Gastrocnemius medialis (tissue), 4 donors: ENCODE measurements at regions of chr20 and their contacts with region 1.

Region 1: DNA sequence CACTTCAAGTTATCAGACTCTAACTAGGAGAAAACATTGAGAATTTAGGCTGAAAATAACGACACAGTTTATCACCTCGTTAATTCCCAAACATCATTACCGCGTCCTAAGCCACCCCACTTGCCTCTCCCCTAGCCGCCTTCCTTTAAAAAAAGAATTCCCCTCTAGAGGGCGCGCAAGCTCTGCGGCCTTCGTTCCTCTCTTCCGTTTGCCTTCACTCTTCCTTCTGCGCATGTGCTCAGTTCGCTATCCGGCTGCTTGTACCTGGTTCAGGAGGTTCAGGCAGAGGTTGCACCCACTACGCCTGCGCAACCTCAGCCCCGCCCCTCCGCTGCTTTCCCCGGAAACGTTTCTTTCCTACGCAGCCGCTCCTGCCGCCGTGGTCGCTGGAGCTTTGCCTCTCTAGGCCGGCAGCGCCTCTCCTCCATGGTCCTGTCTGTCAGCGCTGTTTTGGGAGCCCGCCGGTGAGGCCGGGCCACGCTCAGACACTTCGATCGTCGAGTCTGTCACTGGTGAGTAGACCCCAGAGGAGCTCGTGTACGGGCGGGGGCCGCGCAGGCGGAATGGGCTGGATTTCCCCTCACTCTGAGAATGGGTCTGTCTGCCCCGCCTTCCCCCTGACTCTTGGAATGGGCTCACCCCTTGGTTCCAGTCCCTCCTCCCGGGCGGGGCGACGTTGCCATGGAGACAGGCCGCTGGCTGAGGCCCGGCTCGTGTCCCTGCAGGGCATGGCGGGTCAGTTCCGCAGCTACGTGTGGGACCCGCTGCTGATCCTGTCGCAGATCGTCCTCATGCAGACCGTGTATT is at the start of gene SYS1:
- DNase-seq: peak; percentile 98
- ATAC-seq: peak; percentile 63 to 76
- H3K4me3 ChIP-seq: peak within 1 kb of the TSS; percentile 66 to 86 (median 75)
- H3K27ac ChIP-seq: peak within 1 kb of the TSS; percentile 94 to 99 (median 96)
- H3K4me1 ChIP-seq: peaks cover 26 to 27% of the 10 kb centered on the region in 2 donors
- H3K27me3 ChIP-seq: no peaks in the 10 kb centered on the region
- CTCF ChIP-seq: peak; percentile 89 to 95 (median 95)
- POLR2A ChIP-seq: peak; percentile 90 to 97
- total RNA-seq, gene SYS1: 34.0 to 59.5 (median 43.7) TPM

Region 2: DNA sequence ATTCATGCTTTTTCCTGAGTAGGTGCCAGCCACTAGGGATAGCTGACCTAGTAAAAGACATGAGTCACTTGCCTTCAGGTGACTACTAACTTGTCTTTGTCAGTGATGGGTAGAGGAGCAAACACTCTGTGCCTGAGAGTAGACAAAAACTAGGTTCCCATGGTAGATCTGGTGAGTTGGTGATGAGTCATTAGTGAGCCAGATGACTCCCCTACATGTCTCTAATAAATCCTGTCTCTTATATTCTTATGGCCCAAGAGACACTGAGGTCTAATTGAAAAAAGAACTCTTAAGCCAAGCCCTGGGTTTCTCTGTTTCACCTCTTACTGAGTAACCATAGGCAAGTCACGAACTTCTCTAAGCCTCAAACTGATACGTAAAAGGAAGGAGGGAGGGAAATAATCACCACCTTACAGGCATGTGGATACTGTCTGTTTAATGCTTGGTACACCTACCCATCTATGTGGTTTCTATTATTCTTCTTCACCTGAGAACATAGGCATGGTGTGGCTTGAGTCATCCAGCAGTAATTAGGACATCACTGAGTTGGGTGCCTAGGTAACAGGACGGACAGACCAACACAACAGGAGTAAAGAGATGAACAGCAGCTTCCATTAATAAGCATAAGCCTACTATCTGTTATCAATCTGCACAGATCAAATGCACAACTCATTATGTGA is 867.1 kb before region 1 on chr20:
- in situ Hi-C with region 1: no loop called
- intact Hi-C with region 1: loop called (anchors 10 kb)
- DNase-seq: no peak
- ATAC-seq: peak; percentile 76 to 82
- H3K4me3 ChIP-seq: no peak overlapping the region
- H3K27ac ChIP-seq: peak overlapping the region; percentile 82 to 93 (median 91)
- H3K4me1 ChIP-seq: peaks cover 40 to 48% of the 10 kb centered on the region in 2 donors
- H3K27me3 ChIP-seq: no peaks in the 10 kb centered on the region
- CTCF ChIP-seq: no peak
- POLR2A ChIP-seq: no peak

Region 3: DNA sequence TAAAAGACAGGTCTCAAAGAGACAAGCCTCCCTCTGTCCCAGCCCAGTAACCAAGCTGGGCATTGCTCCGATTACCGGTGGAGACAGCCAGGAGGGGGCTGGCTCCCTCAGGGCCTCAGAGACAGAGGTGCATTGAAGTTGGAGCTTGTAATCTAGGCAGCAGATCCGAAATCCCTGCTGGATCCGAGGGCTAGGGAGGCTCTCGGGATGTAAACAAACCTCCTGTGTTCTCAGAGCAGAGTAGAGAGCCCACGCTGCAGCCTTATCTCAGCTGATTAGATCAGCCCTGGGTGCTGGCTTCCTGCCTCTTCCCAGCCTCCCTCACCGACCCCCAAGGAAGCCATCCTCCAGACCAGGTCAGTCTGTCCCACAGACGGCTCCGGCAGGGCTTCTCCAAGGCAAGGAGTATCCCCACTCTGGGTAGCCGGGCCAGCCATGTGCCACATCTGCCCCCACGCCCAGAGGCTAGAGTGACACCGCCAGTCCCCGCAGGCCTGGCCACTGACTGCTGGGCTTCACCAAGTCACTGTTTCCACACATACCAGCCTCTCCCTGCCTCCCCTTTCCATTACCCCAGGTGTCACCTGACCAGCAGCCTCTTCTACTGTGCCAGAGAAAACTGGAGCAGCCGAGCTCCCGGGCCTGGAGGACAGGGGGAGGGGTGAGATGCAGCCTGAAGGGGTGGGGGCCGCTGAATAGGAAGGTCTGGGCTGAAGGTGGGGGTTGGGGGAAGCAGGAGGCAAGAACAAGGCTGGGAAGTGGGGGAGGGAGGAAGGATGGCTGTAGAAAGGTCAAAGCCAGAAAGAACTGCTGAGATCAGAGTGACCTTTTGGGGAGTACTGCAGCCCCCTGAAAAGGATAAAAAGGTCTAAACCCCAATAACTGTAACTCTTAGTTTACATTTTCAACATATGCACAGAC is 20.8 kb before region 1 on chr20:
- in situ Hi-C with region 1: no loop called
- intact Hi-C with region 1: loop called (anchors 1 kb)
- DNase-seq: peak; percentile 89 to 96
- ATAC-seq: peak; percentile 42 to 50
- H3K4me3 ChIP-seq: peak overlapping the region; percentile 48 to 97 (median 75)
- H3K27ac ChIP-seq: peak overlapping the region; percentile 90 to 100 (median 98)
- H3K4me1 ChIP-seq: peaks cover 78 to 94% of the 10 kb centered on the region in 2 donors
- H3K27me3 ChIP-seq: no peaks in the 10 kb centered on the region
- CTCF ChIP-seq: no peak
- POLR2A ChIP-seq: peak; percentile 88 to 91

Region 4: DNA sequence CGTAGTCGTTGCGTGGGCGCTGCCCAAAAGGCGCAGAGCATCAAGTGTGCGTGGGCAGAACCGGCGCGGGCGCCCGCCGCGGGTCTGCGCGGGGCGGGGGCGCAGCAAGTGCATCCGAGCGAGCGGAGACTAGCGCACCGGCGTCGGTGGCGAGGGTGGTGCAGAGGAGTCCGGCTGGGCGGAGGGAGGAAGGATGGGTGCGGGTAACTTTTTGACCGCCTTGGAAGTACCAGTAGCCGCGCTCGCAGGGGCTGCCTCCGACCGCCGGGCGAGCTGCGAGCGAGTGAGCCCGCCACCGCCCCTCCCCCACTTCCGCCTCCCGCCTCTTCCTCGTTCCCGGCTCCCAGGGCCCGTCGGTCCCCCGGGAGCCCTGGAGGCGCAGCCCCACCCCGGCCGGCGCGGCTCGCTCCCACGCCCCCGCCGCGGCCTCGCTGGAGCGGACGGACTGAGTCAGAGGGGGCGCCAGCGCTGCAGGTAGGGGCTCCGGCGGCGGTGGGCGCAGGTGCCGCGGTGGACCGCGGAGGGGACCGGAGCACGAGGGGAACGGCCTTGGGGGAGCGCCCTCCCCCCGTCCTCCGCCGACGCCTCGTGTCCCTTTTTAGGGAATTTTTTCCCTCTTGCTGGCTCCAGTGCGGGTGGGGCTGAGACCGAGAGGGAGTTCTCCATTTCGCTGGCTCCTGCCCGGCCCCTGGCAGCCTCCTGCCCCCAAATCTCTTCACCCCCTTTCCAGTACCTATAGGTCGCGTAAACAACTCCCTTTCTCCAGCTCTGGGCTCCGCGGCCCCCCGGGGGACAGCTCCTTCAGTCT is 43.5 kb after region 1 on chr20:
- in situ Hi-C with region 1: no loop called
- intact Hi-C with region 1: loop called (anchors 1 kb)
- DNase-seq: peak; percentile 49 to 62
- ATAC-seq: peak; percentile 70 to 73
- H3K4me3 ChIP-seq: peak overlapping the region; percentile 87 to 96 (median 91)
- H3K27ac ChIP-seq: peak overlapping the region; percentile 96 to 100 (median 98)
- H3K4me1 ChIP-seq: peaks cover 40 to 42% of the 10 kb centered on the region in 2 donors
- H3K27me3 ChIP-seq: no peaks in the 10 kb centered on the region
- CTCF ChIP-seq: no peak
- POLR2A ChIP-seq: peak; percentile 55 to 62

Region 5: GRCh38 chr20:45436732-45437391 is 73.9 kb after region 1 on chr20:
- in situ Hi-C with region 1: loop called in 1 of 4 experiments (anchors 5 kb)
- intact Hi-C with region 1: loop called (anchors 2 kb)
- DNase-seq: peak; percentile 64 to 87
- ATAC-seq: peak; percentile 94 to 96
- H3K4me3 ChIP-seq: peak overlapping the region; percentile 60 to 82 (median 74)
- H3K27ac ChIP-seq: peak overlapping the region; percentile 81 to 86 (median 84)
- H3K4me1 ChIP-seq: peaks cover 4 to 6% of the 10 kb centered on the region in 2 donors
- H3K27me3 ChIP-seq: no peaks in the 10 kb centered on the region
- CTCF ChIP-seq: peak; percentile 94 to 98 (median 97)
- POLR2A ChIP-seq: no peak

Region 6: GRCh38 chr20:45792332-45792686 is 429.3 kb after region 1 on chr20:
- in situ Hi-C with region 1: no loop called
- intact Hi-C with region 1: loop called (anchors 5 kb)
- DNase-seq: no peak
- ATAC-seq: no peak
- H3K4me3 ChIP-seq: peak overlapping the region; percentile 82 to 100 (median 97)
- H3K27ac ChIP-seq: peak overlapping the region; percentile 94 to 100 (median 97)
- H3K4me1 ChIP-seq: peaks cover 21 to 33% of the 10 kb centered on the region in 2 donors
- H3K27me3 ChIP-seq: no peaks in the 10 kb centered on the region
- CTCF ChIP-seq: no peak
- POLR2A ChIP-seq: no peak